Common myeloid progenitor, CD34-positive (primary cell): ENCODE measurements at regions of chr3 and their contacts with region 1.

Region 1: DNA sequence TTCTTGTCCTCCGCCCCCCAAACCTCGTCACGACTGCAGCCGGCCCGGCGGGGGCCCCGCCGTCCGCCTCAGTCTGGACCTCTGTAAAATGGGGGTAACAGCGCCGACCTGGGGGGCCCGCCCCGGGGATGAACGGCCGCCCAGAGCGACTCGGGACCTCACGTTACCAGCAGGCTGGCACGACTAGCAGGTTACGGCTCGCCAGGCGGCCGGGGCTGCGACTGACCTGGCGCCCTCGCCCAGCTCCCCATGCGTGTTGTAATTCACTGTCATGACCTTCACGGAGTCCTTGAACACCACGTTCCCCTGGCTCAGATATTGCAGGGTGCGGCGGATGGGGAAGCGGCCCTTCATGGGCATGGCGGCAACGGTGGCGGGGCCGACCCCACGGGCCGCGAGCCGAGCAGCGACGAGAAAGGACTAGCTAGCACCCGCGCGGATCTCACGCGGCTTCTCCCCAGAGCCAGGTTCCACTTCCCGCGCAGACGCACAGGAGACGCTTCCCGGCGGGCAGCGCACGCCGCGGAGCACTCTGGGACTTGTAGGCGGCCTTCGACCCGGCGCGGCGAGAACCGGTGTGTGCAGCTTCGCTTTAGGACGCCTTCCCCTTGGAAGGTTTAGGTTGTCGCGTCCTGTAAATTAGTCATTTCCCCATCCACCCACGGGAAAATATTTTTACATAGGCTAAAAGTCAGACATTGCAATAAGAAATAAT is at the start of gene MRPS25:
- DNase-seq: peak; percentile 88 to 95 (median 94)
- H3K4me3 ChIP-seq: peak within 1 kb of the TSS; percentile 81 to 95 (median 84)
- H3K27ac ChIP-seq: peak within 1 kb of the TSS; percentile 54 to 85
- H3K4me1 ChIP-seq: peaks cover 0 to 21% (median 16%) of the 10 kb centered on the region in 4 experiments
- H3K27me3 ChIP-seq: no peaks in the 10 kb centered on the region

Region 2: GRCh38 chr3:14933820-14934425 is 131.1 kb before region 1 on chr3:
- CTCF ChIA-PET with region 1: no interaction called
- POLR2A ChIA-PET with region 1: no interaction called
- DNase-seq: no peak
- H3K4me3 ChIP-seq: no peak overlapping the region
- H3K27ac ChIP-seq: no peak overlapping the region
- H3K4me1 ChIP-seq: peaks cover 0 to 3% (median 0%) of the 10 kb centered on the region in 4 experiments
- H3K27me3 ChIP-seq: no peaks in the 10 kb centered on the region

Region 3: GRCh38 chr3:15051531-15051930 is 13.5 kb before region 1 on chr3:
- CTCF ChIA-PET with region 1: interaction called, 18 read pairs
- POLR2A ChIA-PET with region 1: interaction called, 3 read pairs
- DNase-seq: peak; percentile 25 to 56 (median 46)
- H3K4me3 ChIP-seq: no peak overlapping the region
- H3K27ac ChIP-seq: no peak overlapping the region
- H3K4me1 ChIP-seq: peaks cover 0 to 3% (median 1%) of the 10 kb centered on the region in 4 experiments
- H3K27me3 ChIP-seq: no peaks in the 10 kb centered on the region

Region 4: GRCh38 chr3:15186101-15186476 is 121.1 kb after region 1 on chr3:
- CTCF ChIA-PET with region 1: no interaction called
- POLR2A ChIA-PET with region 1: no interaction called
- DNase-seq: no peak
- H3K4me3 ChIP-seq: no peak overlapping the region
- H3K27ac ChIP-seq: no peak overlapping the region
- H3K4me1 ChIP-seq: no peaks in the 10 kb centered on the region
- H3K27me3 ChIP-seq: peaks cover 0 to 2% (median under 1%) of the 10 kb centered on the region in 5 experiments